ENCODE measurements at regions of chr3 and their contacts with region 1.

Region 1: GRCh38 chr3:59411186-59411585 is 361.4 kb upstream of the CFAP20DC start:
- DNase-seq: peak; percentile 32
- ATAC-seq: peak; percentile 74
- H3K4me3 ChIP-seq: no peak overlapping the region
- H3K27ac ChIP-seq: no peak overlapping the region
- H3K4me1 ChIP-seq: peaks cover 12% of the 10 kb centered on the region
- H3K27me3 ChIP-seq: no peaks in the 10 kb centered on the region
- CTCF ChIP-seq: no peak

Region 2: DNA sequence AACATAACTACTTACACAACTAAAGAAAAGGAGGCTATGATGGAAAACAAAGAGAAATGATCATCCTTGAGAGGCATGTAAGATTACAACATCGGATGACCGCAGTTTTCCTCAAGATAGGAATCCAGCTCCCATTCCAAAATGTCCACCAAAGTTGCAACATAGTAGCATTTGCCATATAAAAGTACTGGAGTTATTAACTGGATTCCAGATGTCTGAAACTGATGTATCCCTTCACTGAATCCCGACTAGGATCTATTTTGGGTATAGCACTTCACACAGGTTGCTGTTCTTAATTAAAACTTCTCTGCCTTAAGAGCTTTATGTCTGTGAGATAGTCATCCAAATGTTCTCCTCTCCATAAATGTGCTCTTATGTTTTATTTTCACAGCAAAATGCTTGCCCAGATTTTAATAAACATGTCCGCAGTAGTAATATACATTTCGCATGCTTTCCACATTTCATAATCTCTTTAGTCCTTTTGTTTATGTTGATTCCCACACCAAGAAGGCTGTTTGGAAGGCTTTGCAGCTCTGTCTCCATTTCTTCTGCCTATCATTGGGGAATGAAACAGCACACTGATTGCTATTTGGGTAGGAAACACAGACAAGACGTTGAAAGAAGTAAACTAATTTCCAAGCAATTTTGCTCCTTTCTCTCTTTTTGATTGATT is 355.1 kb after region 1 on chr3:
- CTCF ChIA-PET with region 1: no interaction called
- POLR2A ChIA-PET with region 1: no interaction called
- intact Hi-C with region 1: loop called (anchors 5 kb)
- DNase-seq: no peak
- ATAC-seq: no peak
- H3K4me3 ChIP-seq: no peak overlapping the region
- H3K27ac ChIP-seq: no peak overlapping the region
- H3K4me1 ChIP-seq: peaks cover 2% of the 10 kb centered on the region
- H3K27me3 ChIP-seq: no peaks in the 10 kb centered on the region
- CTCF ChIP-seq: no peak

Measured in PC-3 (cell line).